Aorta (tissue), 5 donors: ENCODE measurements at regions of chr10 and their contacts with region 1.

Region 1: DNA sequence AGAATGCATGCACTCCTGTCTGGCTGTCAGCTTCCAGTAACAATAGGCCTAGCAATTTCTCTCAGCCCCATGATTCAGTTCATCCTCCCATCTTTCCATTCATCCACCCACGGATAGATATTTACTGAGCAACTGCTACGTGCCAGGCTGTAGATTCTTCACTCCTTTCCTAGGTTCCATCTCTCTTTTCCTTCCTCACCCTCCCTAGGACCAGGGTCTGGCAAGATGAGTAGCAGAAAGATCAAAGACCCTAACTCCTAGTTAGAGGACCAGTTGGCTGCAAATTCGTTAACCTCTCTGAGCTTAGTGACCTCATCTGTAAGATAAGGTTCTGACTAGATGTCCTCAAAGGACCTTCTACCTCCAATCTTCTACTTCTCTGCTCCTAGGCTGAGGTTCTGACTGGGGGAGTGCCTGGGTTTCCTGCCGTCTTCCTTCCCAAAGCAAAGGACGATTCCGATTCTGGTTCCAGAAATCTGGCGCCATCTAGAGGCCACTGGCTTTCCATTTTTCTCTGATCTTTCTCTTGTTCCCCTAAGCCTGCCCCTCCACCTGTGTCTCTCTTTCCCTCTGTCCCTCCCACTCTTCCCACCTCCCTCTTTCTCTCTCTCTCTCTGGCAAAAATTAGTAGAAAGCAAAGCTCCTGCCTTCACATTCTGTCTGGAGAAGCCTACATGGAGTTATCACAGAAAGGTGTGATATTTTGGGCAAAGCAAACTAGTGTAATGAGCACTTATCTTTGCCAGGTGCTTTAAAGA is 26.2 kb downstream of the TBATA start:
- DNase-seq: peak; percentile 73 to 85
- ATAC-seq: peak; percentile 39
- H3K4me3 ChIP-seq: no peak overlapping the region
- H3K27ac ChIP-seq: no peak overlapping the region
- H3K4me1 ChIP-seq: no peaks in the 10 kb centered on the region
- H3K27me3 ChIP-seq: no peaks in the 10 kb centered on the region

Region 2: DNA sequence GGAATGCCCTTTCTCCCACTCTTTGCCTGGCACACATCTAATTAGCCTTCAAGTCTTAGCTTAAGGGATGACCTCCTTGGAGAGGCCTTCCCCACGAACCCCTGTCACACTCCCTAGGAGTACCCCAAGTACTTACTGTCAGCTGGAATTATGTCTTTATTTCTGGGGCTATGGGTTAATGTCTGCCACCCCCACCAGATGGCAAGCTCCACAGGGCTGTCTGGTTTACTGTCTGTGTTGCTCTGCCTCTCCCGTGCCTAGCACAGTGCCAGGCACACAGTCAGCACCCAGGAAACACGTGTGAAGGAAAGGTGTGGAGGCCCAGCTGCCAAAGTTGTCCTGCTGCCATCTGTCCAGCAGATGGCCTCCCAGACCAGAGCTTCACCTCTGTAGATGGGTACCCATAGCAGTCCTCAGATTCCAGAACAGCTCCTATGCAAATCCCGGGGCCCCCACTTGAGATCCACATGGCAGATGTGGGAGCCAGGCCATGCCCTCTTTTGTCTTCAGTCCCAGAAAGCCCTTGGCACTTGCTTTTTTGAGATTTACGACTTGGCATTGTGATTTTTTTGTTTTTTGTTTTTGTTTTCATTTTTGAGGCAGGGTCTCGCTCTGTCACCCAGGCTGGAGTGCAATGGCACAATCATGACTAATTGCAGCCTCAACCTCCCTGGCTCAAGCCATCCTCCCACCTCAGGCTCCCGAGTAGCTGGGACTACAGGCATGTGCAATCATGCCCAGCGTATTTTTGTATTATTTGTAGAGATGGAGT is 297.5 kb before region 1 on chr10:
- intact Hi-C with region 1: loop called (anchors 2 to 5 kb)
- DNase-seq: peak in 1 of 2 donors; percentile 81
- ATAC-seq: peak; percentile 70
- H3K4me3 ChIP-seq: no peak overlapping the region
- H3K27ac ChIP-seq: no peak overlapping the region
- H3K4me1 ChIP-seq: no peaks in the 10 kb centered on the region
- H3K27me3 ChIP-seq: no peaks in the 10 kb centered on the region

Region 3: GRCh38 chr10:70549962-70550458 is 208.9 kb before region 1 on chr10:
- intact Hi-C with region 1: loop called (anchors 1 kb)
- DNase-seq: peak in 1 of 2 donors; percentile 74
- ATAC-seq: peak; percentile 78
- H3K4me3 ChIP-seq: no peak overlapping the region
- H3K27ac ChIP-seq: no peak overlapping the region
- H3K4me1 ChIP-seq: no peaks in the 10 kb centered on the region
- H3K27me3 ChIP-seq: no peaks in the 10 kb centered on the region

Region 4: DNA sequence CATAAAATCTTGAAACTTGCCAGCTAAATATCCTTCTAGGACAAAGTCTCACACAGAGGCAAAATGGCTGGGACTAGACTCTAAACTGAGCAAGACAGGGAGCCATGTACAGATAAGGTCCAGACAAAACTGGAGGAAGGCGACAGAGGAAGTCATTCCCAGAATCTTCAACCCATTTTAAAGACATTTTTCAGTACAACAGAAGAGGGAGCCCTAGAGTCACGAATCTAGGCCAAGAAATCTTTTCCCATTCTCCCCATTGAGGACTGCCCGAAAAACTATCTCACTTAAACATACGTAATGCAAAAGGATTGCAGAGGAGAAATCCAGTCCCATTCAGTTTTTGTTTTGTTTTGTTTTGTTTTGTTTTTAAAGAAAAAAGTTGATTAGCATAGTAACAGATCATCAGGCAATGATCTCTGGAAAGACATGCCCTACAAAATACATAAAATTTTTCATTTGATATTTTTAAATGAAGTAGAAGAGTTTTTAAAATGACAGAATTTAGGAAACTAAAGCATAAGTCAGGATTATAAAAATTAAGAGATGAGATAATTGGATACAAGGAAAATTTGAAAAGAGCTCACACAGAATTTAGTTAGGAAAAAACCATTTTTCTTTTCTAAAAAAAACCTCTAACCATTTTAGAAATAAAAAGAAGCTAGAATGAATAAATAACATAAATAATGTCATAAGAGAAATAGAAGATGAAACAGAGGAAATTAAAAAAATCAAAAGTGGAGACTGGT is 139.5 kb before region 1 on chr10:
- intact Hi-C with region 1: no loop called
- DNase-seq: no peak
- ATAC-seq: no peak
- H3K4me3 ChIP-seq: no peak overlapping the region
- H3K27ac ChIP-seq: no peak overlapping the region
- H3K4me1 ChIP-seq: no peaks in the 10 kb centered on the region
- H3K27me3 ChIP-seq: no peaks in the 10 kb centered on the region

Region 5: DNA sequence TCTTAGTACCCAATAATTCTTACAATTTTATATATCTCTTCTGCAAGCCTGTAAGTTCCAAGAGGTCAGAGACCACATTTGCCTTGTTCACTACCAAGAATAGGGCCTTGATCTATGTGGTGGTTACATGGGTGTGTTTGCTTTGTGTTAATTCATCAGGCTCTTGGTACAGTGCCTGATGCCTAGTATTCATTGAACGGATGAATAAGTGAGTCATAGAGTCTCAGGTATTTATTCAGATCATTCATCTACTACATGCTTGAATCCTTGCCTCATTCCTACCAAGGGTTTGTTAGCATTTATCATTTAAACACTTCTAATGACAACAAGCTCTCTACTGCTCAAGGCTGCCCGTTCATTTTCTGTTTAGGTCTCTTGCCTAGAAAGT is 45.5 kb after region 1 on chr10:
- intact Hi-C with region 1: no loop called
- DNase-seq: no peak
- ATAC-seq: no peak
- H3K4me3 ChIP-seq: no peak overlapping the region
- H3K27ac ChIP-seq: no peak overlapping the region
- H3K4me1 ChIP-seq: no peaks in the 10 kb centered on the region
- H3K27me3 ChIP-seq: no peaks in the 10 kb centered on the region